ENCODE measurements at regions of chr4 and their contacts with region 1.

Region 1: DNA sequence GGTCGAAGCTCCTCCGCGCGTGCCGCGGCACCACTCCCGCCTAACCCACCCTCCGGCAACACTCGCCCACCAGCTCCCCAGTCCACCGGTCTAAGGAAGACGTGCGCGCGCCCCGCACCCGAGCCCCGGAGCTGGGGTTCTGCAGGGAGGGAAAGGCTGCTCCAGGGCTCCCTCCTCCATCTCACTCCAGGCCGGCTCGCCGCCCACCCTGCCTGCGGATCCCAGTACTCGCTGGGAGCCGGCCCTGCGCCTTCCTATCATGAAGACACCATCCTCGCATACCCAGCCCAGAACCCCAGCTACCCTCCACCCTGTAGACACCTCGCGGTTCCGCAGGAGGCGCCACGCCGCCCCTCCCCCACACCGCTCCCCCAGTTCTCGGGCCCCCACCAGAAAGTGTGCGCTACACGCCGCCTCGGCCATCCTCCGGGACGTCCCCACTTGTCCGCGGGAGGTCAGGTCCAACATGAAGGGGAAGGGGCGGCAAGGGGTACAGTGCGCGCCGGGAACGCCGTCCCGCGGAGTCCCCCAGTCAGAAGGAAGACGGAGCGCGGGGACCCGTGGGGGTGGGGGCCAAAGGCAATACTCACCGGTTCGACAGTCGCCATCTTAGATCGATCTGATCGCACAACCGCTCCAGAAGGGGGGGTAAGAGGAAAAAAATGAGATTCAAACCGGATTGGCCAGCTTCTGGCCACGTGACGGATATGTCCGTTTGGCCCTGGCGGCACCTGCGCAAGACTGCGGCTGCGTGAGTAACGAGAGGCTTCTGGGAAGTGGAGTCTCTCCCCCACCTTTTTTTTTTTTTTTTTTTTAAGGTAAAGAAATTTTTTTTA is at the start of gene EIF4E:
- DNase-seq: peak; percentile 99
- H3K4me3 Mint-ChIP-seq: peak within 1 kb of the TSS; percentile 96
- H3K27ac Mint-ChIP-seq: peak within 1 kb of the TSS; percentile 93
- H3K4me1 Mint-ChIP-seq: peaks cover 13% of the 10 kb centered on the region
- H3K27me3 Mint-ChIP-seq: no peaks in the 10 kb centered on the region
- CTCF ChIP-seq: no peak
- total RNA-seq, gene EIF4E: 104 and 106 TPM in 2 replicates

Region 2: GRCh38 chr4:98143001-98143899 is 785.5 kb before region 1 on chr4 and contains the start of gene STPG2:
- CTCF ChIA-PET with region 1: interaction called, 3 read pairs
- POLR2A ChIA-PET with region 1: interaction called, 22 read pairs
- intact Hi-C with region 1: loop called (anchors 5 kb)
- DNase-seq: peak; percentile 96
- H3K4me3 Mint-ChIP-seq: peak within 1 kb of the TSS; percentile 91
- H3K27ac Mint-ChIP-seq: peak within 1 kb of the TSS; percentile 95
- H3K4me1 Mint-ChIP-seq: peaks cover 15% of the 10 kb centered on the region
- H3K27me3 Mint-ChIP-seq: no peaks in the 10 kb centered on the region
- CTCF ChIP-seq: peak; percentile 21
- total RNA-seq, gene STPG2: 0.22 and 0.61 TPM in 2 replicates

Region 3: GRCh38 chr4:98658287-98659105 is 270.2 kb before region 1 on chr4 and contains the start of gene TSPAN5:
- CTCF ChIA-PET with region 1: interaction called, 3 read pairs
- POLR2A ChIA-PET with region 1: interaction called, 14 read pairs
- intact Hi-C with region 1: loop called (anchors 10 kb)
- DNase-seq: peak; percentile 74
- H3K4me3 Mint-ChIP-seq: peak within 1 kb of the TSS; percentile 81
- H3K27ac Mint-ChIP-seq: no peak within 1 kb of the TSS
- H3K4me1 Mint-ChIP-seq: peaks cover 50% of the 10 kb centered on the region
- H3K27me3 Mint-ChIP-seq: no peaks in the 10 kb centered on the region
- CTCF ChIP-seq: no peak
- total RNA-seq, gene TSPAN5: 18.5 and 19.8 TPM in 2 replicates

Region 4: DNA sequence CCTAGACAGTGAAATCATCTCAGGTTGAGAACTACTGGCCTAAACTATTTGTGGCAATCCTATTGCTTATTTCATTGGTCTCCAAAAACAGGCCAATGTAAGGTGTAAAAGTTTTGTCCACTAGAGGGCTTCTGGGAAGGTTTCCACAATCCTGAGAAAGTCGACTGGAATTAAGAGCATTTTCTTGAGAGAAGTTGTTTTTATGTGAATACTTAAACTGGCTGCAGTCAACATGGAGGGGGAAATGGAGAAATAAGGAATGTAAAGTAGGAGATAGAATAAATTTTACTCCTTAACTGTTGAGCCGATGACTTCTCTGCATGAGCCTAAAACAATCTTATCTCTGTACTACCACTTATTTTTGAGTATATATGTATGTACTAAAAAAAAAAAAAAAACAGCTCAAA is 11.2 kb after region 1 on chr4:
- CTCF ChIA-PET with region 1: interaction called, 4 read pairs
- POLR2A ChIA-PET with region 1: interaction called, 12 read pairs
- intact Hi-C with region 1: no loop called
- DNase-seq: peak; percentile 68
- H3K4me3 Mint-ChIP-seq: no peak overlapping the region
- H3K27ac Mint-ChIP-seq: no peak overlapping the region
- H3K4me1 Mint-ChIP-seq: peaks cover 22% of the 10 kb centered on the region
- H3K27me3 Mint-ChIP-seq: no peaks in the 10 kb centered on the region
- CTCF ChIP-seq: peak; percentile 55

Region 5: GRCh38 chr4:99061048-99061700 is 132.5 kb after region 1 on chr4:
- CTCF ChIA-PET with region 1: interaction called, 11 read pairs
- POLR2A ChIA-PET with region 1: interaction called, 22 read pairs
- intact Hi-C with region 1: loop called (anchors 5 kb)
- DNase-seq: no peak
- H3K4me3 Mint-ChIP-seq: no peak overlapping the region
- H3K27ac Mint-ChIP-seq: peak overlapping the region; percentile 93
- H3K4me1 Mint-ChIP-seq: peaks cover 21% of the 10 kb centered on the region
- H3K27me3 Mint-ChIP-seq: no peaks in the 10 kb centered on the region
- CTCF ChIP-seq: no peak

Region 6: DNA sequence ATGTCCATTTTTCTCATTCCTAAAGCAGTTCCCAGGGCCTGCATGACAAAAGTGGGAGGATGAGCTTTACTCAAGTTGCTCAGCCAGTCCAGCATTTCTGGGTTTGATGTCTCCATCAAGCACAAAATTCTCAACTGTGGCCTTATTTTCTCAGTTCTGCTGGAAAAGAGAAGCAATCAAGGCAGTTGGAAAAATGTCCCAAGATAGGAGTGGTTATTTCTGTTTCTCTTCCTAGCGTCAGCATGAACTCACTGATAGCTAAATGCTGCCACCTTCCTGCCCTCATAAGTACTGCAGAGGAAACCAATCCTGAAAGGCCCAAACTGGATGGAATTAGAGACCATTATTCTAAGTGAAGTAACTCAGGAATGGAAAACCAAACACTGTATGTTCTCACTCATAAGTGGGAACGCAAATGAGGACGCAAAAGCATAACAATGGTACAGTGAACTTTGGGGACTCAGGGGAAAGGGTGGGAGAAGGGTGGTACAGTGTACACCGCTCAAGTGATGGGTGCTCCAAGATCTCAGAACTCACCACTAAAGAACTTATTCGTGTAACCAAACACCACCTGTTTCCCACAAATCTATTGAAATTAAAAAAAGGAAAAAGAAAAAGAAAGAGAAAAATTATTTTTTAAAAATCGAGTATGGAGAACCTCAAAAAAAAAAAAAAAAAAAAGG is 476.9 kb after region 1 on chr4:
- CTCF ChIA-PET with region 1: no interaction called
- POLR2A ChIA-PET with region 1: no interaction called
- intact Hi-C with region 1: loop called (anchors 10 kb)
- DNase-seq: peak; percentile 84
- H3K4me3 Mint-ChIP-seq: no peak overlapping the region
- H3K27ac Mint-ChIP-seq: peak overlapping the region; percentile 76
- H3K4me1 Mint-ChIP-seq: peaks cover 16% of the 10 kb centered on the region
- H3K27me3 Mint-ChIP-seq: no peaks in the 10 kb centered on the region
- CTCF ChIP-seq: peak; percentile 96

Region 7: GRCh38 chr4:99652596-99653436 is 724.1 kb after region 1 on chr4:
- CTCF ChIA-PET with region 1: no interaction called
- POLR2A ChIA-PET with region 1: no interaction called
- intact Hi-C with region 1: no loop called
- DNase-seq: no peak
- H3K4me3 Mint-ChIP-seq: no peak overlapping the region
- H3K27ac Mint-ChIP-seq: no peak overlapping the region
- H3K4me1 Mint-ChIP-seq: peaks cover 14% of the 10 kb centered on the region
- H3K27me3 Mint-ChIP-seq: no peaks in the 10 kb centered on the region
- CTCF ChIP-seq: no peak